Psoas muscle (tissue), 8 donors: ENCODE measurements at regions of chr11 and their contacts with region 1.

Region 1: GRCh38 chr11:14974515-14975251 is 2.5 kb upstream of the CALCA start:
- DNase-seq: peak in 1 of 2 donors; percentile 32
- ATAC-seq: peak; percentile 73 to 87 (median 80)
- H3K4me3 ChIP-seq: peak overlapping the region; percentile 54
- H3K27ac ChIP-seq: no peak overlapping the region
- H3K4me1 ChIP-seq: peaks cover 25% of the 10 kb centered on the region
- H3K27me3 ChIP-seq: peaks cover 3 to 66% (median 29%) of the 10 kb centered on the region in 3 donors
- CTCF ChIP-seq: peak; percentile 56

Region 2: GRCh38 chr11:15074206-15075161 is 99.8 kb after region 1 on chr11:
- intact Hi-C with region 1: loop called (anchors 5 kb)
- DNase-seq: peak; percentile 77 to 87
- ATAC-seq: peak; percentile 90 to 95 (median 94)
- H3K4me3 ChIP-seq: peak overlapping the region; percentile 38
- H3K27ac ChIP-seq: no peak overlapping the region
- H3K4me1 ChIP-seq: peaks cover 9% of the 10 kb centered on the region
- H3K27me3 ChIP-seq: peaks cover 3 to 54% (median 20%) of the 10 kb centered on the region in 3 donors
- CTCF ChIP-seq: peak; percentile 82

Region 3: GRCh38 chr11:15208378-15209222 is 233.9 kb after region 1 on chr11:
- intact Hi-C with region 1: loop called (anchors 10 kb)
- DNase-seq: peak; percentile 64 to 79
- ATAC-seq: peak; percentile 91 to 97 (median 94)
- H3K4me3 ChIP-seq: no peak overlapping the region
- H3K27ac ChIP-seq: no peak overlapping the region
- H3K4me1 ChIP-seq: no peaks in the 10 kb centered on the region
- H3K27me3 ChIP-seq: no peaks in the 10 kb centered on the region
- CTCF ChIP-seq: peak; percentile 95